Naive thymus-derived CD4-positive, alpha-beta T cell (primary cell): ENCODE measurements at regions of chr1 and their contacts with region 1.

Region 1: DNA sequence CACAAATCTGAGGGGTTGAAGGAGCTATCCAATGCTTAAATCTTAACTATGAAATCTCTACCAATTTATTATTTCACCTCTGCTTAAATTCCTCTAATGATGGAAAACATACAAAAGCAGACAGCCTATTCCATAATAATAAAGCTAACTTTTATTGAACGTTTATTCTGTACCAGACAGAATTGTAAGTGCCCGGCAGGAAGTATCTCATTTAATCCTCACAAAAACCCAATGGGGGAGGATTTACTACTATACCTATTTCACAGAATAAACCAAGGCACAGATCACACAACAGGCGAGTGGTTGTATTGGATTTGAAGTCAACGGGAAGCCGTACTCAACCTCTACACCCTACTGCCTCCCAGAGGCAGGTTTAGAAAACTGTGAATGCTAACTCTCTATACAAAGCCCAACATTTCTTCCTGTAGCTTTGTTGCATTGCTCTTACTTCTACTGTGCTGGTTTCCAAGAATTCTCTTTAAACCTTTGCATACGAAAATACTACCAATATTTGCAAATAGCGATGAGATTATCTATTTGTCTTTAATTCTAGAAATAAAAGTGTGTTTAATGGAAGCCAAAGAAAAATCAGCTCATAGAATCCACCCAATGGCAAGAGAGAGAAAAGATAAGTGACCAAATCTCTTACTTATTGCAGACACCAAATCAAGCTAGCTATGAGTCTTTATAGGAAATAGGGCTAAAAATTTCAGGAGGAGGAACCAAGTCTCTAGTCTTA is 33.5 kb upstream of the C1orf53 start:
- DNase-seq: peak in 7 of 9 donors; percentile 17 to 62 (median 41)
- ATAC-seq: peak; percentile 86
- H3K4me3 ChIP-seq: no peak overlapping the region
- H3K4me3 Mint-ChIP-seq: no peak overlapping the region
- H3K27ac ChIP-seq: no peak overlapping the region
- H3K27ac Mint-ChIP-seq: no peak overlapping the region
- H3K4me1 ChIP-seq: no peaks in the 10 kb centered on the region
- H3K4me1 Mint-ChIP-seq: peaks cover 0 to 2% (median 0%) of the 10 kb centered on the region in 7 donors
- H3K27me3 ChIP-seq: no peaks in the 10 kb centered on the region
- H3K27me3 Mint-ChIP-seq: peaks cover 0 to 27% (median 0%) of the 10 kb centered on the region in 5 donors

Region 2: GRCh38 chr1:197327776-197328364 is 541.0 kb before region 1 on chr1:
- CTCF ChIA-PET with region 1: no interaction called
- POLR2A ChIA-PET with region 1: no interaction called
- intact Hi-C with region 1: loop called in 1 of 2 experiments (anchors 5 kb)
- DNase-seq: peak in 4 of 9 donors; percentile 11 to 23 (median 17)
- ATAC-seq: no peak
- H3K4me3 ChIP-seq: no peak overlapping the region
- H3K4me3 Mint-ChIP-seq: no peak overlapping the region
- H3K27ac ChIP-seq: no peak overlapping the region
- H3K27ac Mint-ChIP-seq: no peak overlapping the region
- H3K4me1 ChIP-seq: no peaks in the 10 kb centered on the region
- H3K4me1 Mint-ChIP-seq: no peaks in the 10 kb centered on the region
- H3K27me3 ChIP-seq: no peaks in the 10 kb centered on the region
- H3K27me3 Mint-ChIP-seq: peaks cover 0 to 3% (median 0%) of the 10 kb centered on the region in 5 donors

Region 3: GRCh38 chr1:197526736-197527371 is 342.1 kb before region 1 on chr1:
- CTCF ChIA-PET with region 1: interaction called, 15 read pairs
- POLR2A ChIA-PET with region 1: no interaction called
- intact Hi-C with region 1: loop called (anchors 1 kb)
- DNase-seq: peak in 6 of 9 donors; percentile 9 to 53 (median 37)
- ATAC-seq: peak; percentile 69
- H3K4me3 ChIP-seq: no peak overlapping the region
- H3K4me3 Mint-ChIP-seq: no peak overlapping the region
- H3K27ac ChIP-seq: no peak overlapping the region
- H3K27ac Mint-ChIP-seq: no peak overlapping the region
- H3K4me1 ChIP-seq: no peaks in the 10 kb centered on the region
- H3K4me1 Mint-ChIP-seq: no peaks in the 10 kb centered on the region
- H3K27me3 ChIP-seq: no peaks in the 10 kb centered on the region
- H3K27me3 Mint-ChIP-seq: no peaks in the 10 kb centered on the region

Region 4: DNA sequence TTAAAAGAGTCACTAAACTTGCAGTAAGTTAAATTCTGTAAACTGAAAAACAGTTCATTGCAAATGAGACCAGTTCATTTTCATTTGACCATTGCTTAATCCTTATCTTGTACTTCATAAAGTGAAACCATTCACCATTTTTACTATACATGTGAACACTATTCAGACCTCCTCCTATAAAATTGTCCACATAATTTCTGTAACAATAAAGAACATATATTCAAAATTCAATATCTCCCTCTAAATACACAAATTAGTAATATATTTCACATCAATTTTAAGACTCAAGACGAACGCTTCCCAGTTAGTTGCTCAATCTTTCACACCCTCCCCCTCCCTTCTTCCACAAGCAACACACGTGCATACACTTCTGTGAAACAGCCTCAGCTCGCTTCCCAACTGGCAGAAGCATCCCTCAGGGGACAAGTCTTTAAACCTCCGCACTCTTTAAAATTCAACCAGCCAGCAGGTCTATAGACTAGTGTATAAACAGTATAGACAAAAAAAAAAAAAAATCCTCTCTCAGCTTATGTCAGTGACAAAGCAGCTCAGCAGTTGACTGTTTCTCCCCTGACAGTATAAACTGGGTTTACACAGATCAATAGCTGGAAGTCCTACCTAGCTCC is 193.2 kb before region 1 on chr1:
- CTCF ChIA-PET with region 1: interaction called, 3 read pairs
- POLR2A ChIA-PET with region 1: no interaction called
- intact Hi-C with region 1: loop called in 1 of 2 experiments (anchors 5 kb)
- DNase-seq: no peak
- ATAC-seq: no peak
- H3K4me3 ChIP-seq: no peak overlapping the region
- H3K4me3 Mint-ChIP-seq: no peak overlapping the region
- H3K27ac ChIP-seq: no peak overlapping the region
- H3K27ac Mint-ChIP-seq: peak overlapping the region in 1 of 9 donors; percentile 1
- H3K4me1 ChIP-seq: no peaks in the 10 kb centered on the region
- H3K4me1 Mint-ChIP-seq: peaks cover 2 to 27% (median 18%) of the 10 kb centered on the region in 7 donors
- H3K27me3 ChIP-seq: no peaks in the 10 kb centered on the region
- H3K27me3 Mint-ChIP-seq: no peaks in the 10 kb centered on the region

Region 5: DNA sequence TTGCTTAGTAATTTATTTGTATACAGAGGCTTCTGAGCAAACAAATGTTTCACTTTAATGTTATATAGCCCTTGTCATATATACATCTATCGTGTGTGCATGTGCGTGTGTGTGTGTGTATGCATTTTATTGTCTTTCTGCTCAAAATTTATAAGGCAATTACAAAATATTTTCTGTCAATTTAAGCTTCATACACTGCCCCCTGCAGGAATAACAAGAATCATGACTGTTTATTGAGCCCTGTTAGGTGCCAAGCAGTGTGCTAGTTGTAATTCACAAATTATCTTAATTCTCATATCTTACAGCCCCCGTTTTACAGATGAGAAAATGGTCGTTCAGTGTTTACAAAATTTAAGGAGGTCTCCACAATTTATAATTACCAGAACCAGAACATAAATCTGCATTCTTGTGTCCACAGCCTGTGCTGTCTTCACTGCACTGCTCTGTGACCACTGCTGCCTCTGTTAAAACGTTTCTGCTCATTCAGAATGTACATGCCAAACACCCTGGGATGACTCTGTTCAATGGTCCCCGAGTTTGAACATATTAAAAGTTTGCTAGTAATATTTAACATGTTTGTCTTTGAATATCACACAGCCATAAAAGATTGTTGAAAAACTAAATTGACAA is 490.2 kb after region 1 on chr1:
- CTCF ChIA-PET with region 1: no interaction called
- POLR2A ChIA-PET with region 1: no interaction called
- intact Hi-C with region 1: loop called in 1 of 2 experiments (anchors 1 kb)
- DNase-seq: peak in 5 of 9 donors; percentile 3 to 17 (median 7)
- ATAC-seq: no peak
- H3K4me3 ChIP-seq: no peak overlapping the region
- H3K4me3 Mint-ChIP-seq: no peak overlapping the region
- H3K27ac ChIP-seq: no peak overlapping the region
- H3K27ac Mint-ChIP-seq: no peak overlapping the region
- H3K4me1 ChIP-seq: no peaks in the 10 kb centered on the region
- H3K4me1 Mint-ChIP-seq: peaks cover 0 to 3% (median 0%) of the 10 kb centered on the region in 7 donors
- H3K27me3 ChIP-seq: no peaks in the 10 kb centered on the region
- H3K27me3 Mint-ChIP-seq: peaks cover 0 to 21% (median 3%) of the 10 kb centered on the region in 5 donors

Region 6: GRCh38 chr1:198423673-198424072 is 554.8 kb after region 1 on chr1:
- CTCF ChIA-PET with region 1: no interaction called
- POLR2A ChIA-PET with region 1: no interaction called
- intact Hi-C with region 1: no loop called
- DNase-seq: no peak
- ATAC-seq: no peak
- H3K4me3 ChIP-seq: no peak overlapping the region
- H3K4me3 Mint-ChIP-seq: no peak overlapping the region
- H3K27ac ChIP-seq: no peak overlapping the region
- H3K27ac Mint-ChIP-seq: no peak overlapping the region
- H3K4me1 ChIP-seq: no peaks in the 10 kb centered on the region
- H3K4me1 Mint-ChIP-seq: no peaks in the 10 kb centered on the region
- H3K27me3 ChIP-seq: no peaks in the 10 kb centered on the region
- H3K27me3 Mint-ChIP-seq: peaks cover 0 to 28% (median 0%) of the 10 kb centered on the region in 5 donors